GM12878 (cell line): ENCODE measurements at regions of chr9 and their contacts with region 1.

Region 1: GRCh38 chr9:110125207-110125751 is 82.7 kb downstream of the C9orf152 start:
- DNase-seq: no peak
- ATAC-seq: no peak
- H3K4me3 ChIP-seq: no peak overlapping the region
- H3K27ac ChIP-seq: peak overlapping the region; percentile 29
- H3K4me1 ChIP-seq: peaks cover 58% of the 10 kb centered on the region
- H3K27me3 ChIP-seq: no peaks in the 10 kb centered on the region
- CTCF ChIP-seq: no peak
- EP300 ChIP-seq: no peak
- POLR2A ChIP-seq: no peak
- RAD21 ChIP-seq: no peak

Region 2: DNA sequence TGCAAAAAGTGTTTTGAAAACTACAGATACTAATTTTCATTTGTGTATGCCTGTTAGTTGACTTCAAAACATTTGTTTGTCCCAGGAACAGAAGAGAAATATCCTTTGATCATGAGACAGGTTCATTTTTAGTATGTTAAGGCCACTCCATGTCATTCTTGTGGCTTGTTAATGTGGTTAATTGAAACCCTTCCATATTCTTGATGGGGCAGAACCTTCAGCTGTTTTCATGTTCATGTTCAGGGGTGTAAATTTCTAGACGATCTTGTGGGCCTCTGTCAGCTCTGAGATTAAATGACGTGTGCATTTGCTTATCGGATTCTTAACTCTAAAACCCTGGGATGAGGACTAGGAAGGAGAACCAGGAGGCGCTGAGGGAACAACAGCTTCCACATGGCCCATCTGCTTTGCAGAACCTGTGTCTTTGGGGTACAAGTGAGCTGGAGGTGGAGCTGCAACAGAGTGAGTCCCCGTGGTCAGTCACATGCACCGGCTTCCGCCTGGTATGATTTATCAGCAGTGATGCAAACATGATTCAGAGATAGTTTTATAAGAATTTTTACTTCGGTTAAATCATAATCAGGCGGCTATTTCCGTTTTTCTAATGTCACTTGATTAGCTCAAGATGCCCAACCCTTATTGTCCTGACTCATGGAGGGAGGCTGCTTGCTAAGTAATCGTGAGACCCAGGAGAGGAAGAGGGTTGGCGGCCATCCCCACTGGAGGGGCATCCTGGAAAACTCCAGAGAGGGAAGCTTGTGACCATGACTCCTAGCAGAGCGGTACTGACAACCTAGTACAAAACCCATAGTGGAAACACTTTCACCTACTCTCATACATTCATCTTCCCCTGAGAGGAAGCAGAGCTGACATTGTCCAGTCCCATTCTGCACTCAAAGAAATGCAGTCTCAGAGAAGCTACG is 55.7 kb before region 1 on chr9:
- CTCF ChIA-PET with region 1: interaction called, 4 read pairs
- POLR2A ChIA-PET with region 1: no interaction called
- RAD21 ChIA-PET with region 1: interaction called, 10 read pairs
- SMC1A ChIA-PET with region 1: interaction called, 7 read pairs
- in situ Hi-C with region 1: no loop called
- intact Hi-C with region 1: no loop called
- DNase-seq: no peak
- ATAC-seq: no peak
- H3K4me3 ChIP-seq: no peak overlapping the region
- H3K27ac ChIP-seq: no peak overlapping the region
- H3K4me1 ChIP-seq: peaks cover 29% of the 10 kb centered on the region
- H3K27me3 ChIP-seq: no peaks in the 10 kb centered on the region
- CTCF ChIP-seq: no peak
- EP300 ChIP-seq: no peak
- POLR2A ChIP-seq: no peak
- RAD21 ChIP-seq: no peak

Region 3: DNA sequence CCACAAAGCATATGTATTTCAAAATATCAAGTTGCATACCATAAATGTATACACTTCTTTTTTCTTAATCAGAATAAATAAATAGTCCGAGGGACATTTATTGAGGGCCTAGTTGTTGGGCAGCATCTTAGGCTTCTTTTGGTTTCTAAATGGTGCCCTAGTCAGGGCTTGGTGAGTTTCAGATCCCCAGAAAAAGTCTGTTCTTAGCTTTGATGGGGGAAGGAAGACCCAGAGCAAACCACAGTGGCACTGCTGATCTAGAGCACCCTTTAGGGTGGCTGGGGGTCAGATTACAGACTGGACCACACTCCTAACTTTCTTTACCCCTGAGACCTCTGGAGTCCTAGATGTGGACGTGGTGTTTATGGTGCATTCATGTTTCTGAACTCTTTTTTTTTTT is 15.1 kb before region 1 on chr9:
- CTCF ChIA-PET with region 1: interaction called, 20 read pairs
- POLR2A ChIA-PET with region 1: interaction called, 149 read pairs
- RAD21 ChIA-PET with region 1: interaction called, 340 read pairs
- SMC1A ChIA-PET with region 1: interaction called, 397 read pairs
- in situ Hi-C with region 1: no loop called
- intact Hi-C with region 1: no loop called
- DNase-seq: peak; percentile 51
- ATAC-seq: peak; percentile 96
- H3K4me3 ChIP-seq: no peak overlapping the region
- H3K27ac ChIP-seq: no peak overlapping the region
- H3K4me1 ChIP-seq: peaks cover 27% of the 10 kb centered on the region
- H3K27me3 ChIP-seq: no peaks in the 10 kb centered on the region
- CTCF ChIP-seq: no peak
- EP300 ChIP-seq: no peak
- POLR2A ChIP-seq: no peak
- RAD21 ChIP-seq: no peak

Region 4: DNA sequence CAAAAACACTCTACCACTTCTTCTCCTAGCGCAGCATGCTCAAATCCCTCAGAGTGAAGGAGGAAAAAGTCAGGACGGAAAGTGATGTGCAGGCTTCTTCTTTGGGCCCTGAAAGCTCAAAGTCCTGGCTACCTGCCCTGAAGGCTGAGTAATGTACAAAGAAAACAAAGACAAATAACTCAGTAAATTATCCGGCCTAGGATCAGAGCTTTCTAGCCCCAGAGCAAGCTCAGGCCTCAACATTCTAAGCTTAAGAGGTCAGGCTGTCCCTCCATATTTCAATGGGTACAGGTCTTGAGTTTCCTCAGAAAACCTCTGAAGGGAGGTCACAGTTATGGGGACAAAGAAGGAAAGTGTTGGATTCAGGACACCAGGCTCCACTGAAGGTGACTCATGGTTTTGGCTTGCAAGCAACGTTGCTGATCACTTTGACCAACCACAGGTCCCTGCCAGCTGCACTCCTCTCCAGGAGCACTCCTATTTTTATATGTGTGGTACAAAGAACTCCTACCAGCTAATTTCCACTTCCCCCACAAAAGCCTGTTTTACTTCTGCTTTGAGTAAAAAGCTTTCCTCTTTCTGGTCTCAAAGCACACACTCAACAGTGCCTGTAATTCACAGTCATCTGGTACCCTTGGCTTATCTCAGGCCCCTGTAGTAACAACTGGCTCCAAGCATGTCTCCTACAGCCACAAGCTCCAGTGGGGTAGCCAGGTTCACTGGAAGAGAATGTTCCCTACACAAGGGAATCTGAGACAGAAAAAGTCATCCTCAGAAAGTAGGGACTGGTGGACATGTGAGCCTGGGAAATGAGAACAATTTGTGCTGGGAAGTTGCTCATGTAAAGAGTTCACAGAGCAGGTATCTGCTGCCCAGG is 1887.0 kb after region 1 on chr9:
- CTCF ChIA-PET with region 1: no interaction called
- POLR2A ChIA-PET with region 1: no interaction called
- RAD21 ChIA-PET with region 1: no interaction called
- SMC1A ChIA-PET with region 1: no interaction called
- in situ Hi-C with region 1: loop called (anchors 25 kb)
- intact Hi-C with region 1: no loop called
- DNase-seq: peak; percentile 96
- ATAC-seq: peak; percentile 92
- H3K4me3 ChIP-seq: no peak overlapping the region
- H3K27ac ChIP-seq: peak overlapping the region; percentile 92
- H3K4me1 ChIP-seq: peaks cover 52% of the 10 kb centered on the region
- H3K27me3 ChIP-seq: no peaks in the 10 kb centered on the region
- CTCF ChIP-seq: no peak
- EP300 ChIP-seq: peak; percentile 96 to 97
- POLR2A ChIP-seq: peak; percentile 43; the same call in 1 of the 2 replicates
- RAD21 ChIP-seq: peak; percentile 35